Heart right ventricle (tissue), 16 donors: ENCODE measurements at regions of chr15 and their contacts with region 1.

Region 1: DNA sequence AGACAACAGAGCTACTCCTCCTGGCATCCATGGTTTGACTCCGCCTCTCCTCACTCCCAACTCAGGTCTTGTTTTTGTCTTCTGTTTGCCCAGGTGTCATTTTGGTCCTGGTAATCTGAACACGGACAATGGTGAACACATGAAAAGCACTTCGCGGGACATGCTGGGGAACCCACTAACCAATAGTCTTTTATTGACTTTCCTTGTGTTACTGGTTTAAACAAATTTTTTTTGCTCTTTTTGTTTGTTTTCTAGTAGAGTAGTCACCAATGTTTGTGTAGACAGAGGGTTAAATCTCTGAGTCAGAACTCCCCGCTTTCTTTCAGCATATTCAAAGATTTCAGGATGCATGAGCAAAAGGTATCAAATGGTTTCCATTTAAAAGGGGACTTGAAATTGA is 38.3 kb downstream of the LARP6 start:
- DNase-seq: no peak
- ATAC-seq: no peak
- H3K4me3 ChIP-seq: no peak overlapping the region
- H3K27ac ChIP-seq: no peak overlapping the region
- H3K4me1 ChIP-seq: peaks cover 0 to 10% (median 0%) of the 10 kb centered on the region in 9 donors
- H3K27me3 ChIP-seq: no peaks in the 10 kb centered on the region
- CTCF ChIP-seq: no peak

Region 2: GRCh38 chr15:70722266-70723121 is 93.2 kb before region 1 on chr15:
- intact Hi-C with region 1: loop called in 1 of 10 experiments (anchors 10 kb)
- DNase-seq: no peak
- ATAC-seq: peak in 6 of 8 donors; percentile 16 to 54 (median 35)
- H3K4me3 ChIP-seq: no peak overlapping the region
- H3K27ac ChIP-seq: peak overlapping the region in 2 of 10 donors; percentile 9 to 57
- H3K4me1 ChIP-seq: peaks cover 0 to 71% (median 18%) of the 10 kb centered on the region in 9 donors
- H3K27me3 ChIP-seq: no peaks in the 10 kb centered on the region
- CTCF ChIP-seq: peak; percentile 62 to 86 (median 79)

Region 3: GRCh38 chr15:70783599-70784022 is 32.0 kb before region 1 on chr15:
- intact Hi-C with region 1: no loop called
- DNase-seq: no peak
- ATAC-seq: no peak
- H3K4me3 ChIP-seq: no peak overlapping the region
- H3K27ac ChIP-seq: no peak overlapping the region
- H3K4me1 ChIP-seq: peaks cover 0 to 5% (median 0%) of the 10 kb centered on the region in 9 donors
- H3K27me3 ChIP-seq: no peaks in the 10 kb centered on the region
- CTCF ChIP-seq: no peak